ENCODE measurements at regions of chr9 and their contacts with region 1.

Region 1: DNA sequence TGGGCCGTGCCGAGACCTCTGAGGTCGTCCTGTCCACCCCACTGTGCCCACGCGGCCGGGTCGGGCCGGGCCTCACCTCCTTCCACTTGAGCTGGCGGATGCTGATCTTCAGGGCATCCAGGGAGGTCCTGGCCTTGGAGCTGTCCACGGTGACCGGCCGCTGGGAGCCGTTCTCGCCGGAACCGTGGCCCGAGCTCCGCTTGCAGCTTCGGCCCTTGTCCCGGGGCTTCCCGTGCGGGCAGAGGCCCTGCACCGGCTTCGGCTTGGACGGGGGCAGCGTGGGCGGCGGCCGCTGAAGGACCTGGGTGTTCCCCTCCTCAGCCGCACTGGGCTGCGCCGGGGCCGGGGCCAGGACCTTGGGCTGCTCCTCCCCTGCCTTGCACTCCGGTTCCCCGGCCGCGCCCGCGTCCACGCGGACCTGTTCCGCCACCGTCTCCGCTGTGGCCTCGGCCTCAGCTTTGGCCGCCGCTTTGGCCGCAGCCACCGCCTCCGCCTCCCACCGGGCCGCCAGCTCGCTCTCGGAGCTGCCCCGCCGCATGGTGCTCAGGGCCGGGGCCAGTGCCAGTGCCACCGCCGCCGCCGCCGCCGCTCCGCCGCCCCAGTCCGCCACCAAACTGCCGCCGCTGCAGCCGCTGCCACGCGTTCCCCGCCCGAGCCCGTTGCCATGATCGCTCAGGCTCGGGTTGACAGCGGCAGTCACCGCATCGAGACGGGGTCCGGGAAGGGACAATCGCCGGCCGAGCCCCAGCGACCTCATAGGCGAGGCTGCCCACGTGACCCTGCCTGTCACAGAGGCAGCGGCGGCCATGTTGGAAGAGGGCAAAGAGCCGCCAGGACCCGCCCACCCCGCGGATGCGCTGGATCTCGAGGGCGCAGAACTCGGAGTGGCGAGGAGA is at the start of gene TTLL11:
- DNase-seq: peak; percentile 82 to 94
- H3K4me3 ChIP-seq: peak within 1 kb of the TSS; percentile 86
- H3K27ac ChIP-seq: no peak within 1 kb of the TSS
- H3K4me1 ChIP-seq: peaks cover 8% of the 10 kb centered on the region
- H3K27me3 ChIP-seq: peaks cover 12% of the 10 kb centered on the region; the same call in 1 of the 2 replicates
- CTCF ChIP-seq: no peak
- total RNA-seq, gene TTLL11: 2.0 and 2.3 TPM in 2 replicates

Region 2: DNA sequence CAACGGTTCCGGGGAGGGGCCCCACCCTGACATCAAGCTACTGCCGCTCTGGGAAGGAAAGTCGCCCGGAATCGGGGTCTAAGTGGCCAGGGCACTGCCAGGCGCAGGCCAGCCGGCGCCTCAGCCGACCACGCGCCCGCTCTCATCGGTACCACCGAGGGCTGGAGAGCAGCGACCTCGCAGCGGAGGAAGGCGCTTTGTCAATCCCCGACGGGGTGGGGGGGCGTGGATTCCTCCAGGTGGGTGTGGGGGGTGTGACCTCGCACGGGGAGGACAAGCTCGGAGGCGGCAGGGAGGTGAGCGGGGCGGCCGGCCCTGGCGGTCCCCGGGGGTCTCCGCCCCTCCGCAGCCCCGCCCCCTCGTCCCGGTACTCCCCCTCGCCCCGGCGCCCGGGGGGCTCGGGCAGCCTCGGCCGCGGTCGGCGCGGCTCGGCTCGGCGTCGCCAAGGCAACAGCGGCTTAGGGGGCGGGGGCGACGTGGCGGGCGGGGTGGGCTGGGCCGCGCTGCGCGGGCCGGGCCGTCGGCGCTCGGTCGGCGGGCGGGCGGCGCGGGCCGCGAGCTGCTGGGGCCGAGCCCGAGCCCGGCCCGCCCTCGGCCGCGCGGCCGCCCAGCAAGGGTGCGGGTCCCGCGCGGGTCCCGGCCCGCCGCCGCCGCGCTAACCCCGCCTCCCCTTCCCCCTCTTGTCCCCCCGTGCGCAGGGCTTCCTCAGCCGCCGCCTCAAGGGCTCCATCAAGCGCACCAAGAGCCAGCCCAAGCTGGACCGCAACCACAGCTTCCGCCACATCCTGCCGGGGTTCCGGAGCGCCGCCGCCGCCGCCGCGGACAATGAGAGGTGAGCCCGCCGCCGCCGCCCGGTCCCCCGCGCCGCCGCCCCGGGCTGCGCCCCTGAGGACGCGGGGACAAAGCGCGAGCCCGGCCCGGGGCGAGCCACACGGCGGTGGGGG is 394.0 kb before region 1 on chr9:
- CTCF ChIA-PET with region 1: no interaction called
- POLR2A ChIA-PET with region 1: no interaction called
- intact Hi-C with region 1: loop called (anchors 10 kb)
- DNase-seq: peak in 1 of 2 experiments; percentile 41
- H3K4me3 ChIP-seq: peak overlapping the region; percentile 60; the same call in 1 of the 2 replicates
- H3K27ac ChIP-seq: no peak overlapping the region
- H3K4me1 ChIP-seq: no peaks in the 10 kb centered on the region
- H3K27me3 ChIP-seq: no peaks in the 10 kb centered on the region
- CTCF ChIP-seq: no peak

Region 3: DNA sequence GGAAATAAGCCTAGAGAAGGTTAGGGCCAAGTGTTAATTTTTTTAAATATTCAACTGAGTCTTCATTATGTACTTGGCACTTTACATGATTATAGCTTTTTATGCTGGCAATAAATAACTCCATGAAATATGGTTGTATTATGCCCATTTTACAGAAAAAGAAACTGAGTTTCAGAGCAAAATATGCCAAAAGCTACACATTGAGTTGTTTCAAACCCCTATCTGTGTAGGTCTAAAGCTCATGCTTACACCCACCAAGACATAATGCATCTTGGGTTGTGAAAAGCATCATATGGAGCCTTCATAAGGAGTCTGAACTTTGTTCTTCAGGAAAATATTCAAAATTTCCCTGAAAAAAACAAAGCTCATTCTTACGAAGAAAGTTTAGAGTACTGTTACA is 14.3 kb before region 1 on chr9:
- CTCF ChIA-PET with region 1: interaction called, 13 read pairs
- POLR2A ChIA-PET with region 1: no interaction called
- intact Hi-C with region 1: no loop called
- DNase-seq: no peak
- H3K4me3 ChIP-seq: no peak overlapping the region
- H3K27ac ChIP-seq: no peak overlapping the region
- H3K4me1 ChIP-seq: no peaks in the 10 kb centered on the region
- H3K27me3 ChIP-seq: no peaks in the 10 kb centered on the region
- CTCF ChIP-seq: no peak

Measured in PC-9 (cell line).